Dorsolateral prefrontal cortex (tissue), 120 donors: ENCODE measurements at regions of chr7 and their contacts with region 1.

Region 1: DNA sequence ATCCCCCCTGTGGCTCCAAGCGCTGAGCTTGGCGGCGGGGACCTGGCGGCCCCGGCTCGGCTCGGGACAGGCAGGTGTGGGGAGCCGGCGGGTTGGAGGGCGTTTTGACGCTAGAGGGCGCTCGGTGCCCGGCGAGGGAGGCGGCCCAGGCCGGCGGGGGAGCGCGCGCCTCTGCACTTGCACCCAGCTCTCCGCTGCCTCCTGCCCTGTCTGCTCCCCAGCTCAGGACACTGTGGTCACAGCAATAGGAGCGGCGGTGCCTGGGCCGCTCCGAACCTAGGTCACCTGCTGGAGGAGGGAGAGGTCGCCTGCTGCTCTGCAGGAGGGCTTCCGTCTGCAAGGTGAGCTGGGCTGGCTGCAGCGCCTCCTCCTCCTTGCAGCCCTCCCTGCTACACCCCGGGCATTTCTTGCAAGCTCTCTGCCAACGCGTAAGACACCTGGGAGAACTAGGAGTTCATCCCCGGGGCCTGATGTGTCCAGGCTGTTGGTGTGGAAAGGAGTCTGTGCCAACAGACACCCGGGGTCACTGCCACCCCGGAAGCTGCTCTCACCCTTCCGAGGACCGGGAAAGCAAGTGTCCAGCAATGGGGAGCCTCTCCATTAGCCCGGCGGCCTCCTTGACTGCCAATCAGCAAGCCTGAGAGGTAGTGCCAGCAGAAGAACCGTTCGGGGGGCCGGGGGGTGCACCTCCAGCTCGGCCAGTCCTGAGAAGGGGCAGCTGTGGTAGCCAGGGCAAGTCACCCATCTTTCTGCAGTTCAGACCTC is 620.4 kb downstream of the GALNT17 start:
- DNase-seq: peak; percentile 38 to 84 (median 60)
- H3K4me3 ChIP-seq: peak overlapping the region in 51 of 59 donors; percentile 9 to 58 (median 37)
- H3K27ac ChIP-seq: no peak overlapping the region
- H3K27me3 ChIP-seq: peaks cover 0 to 26% (median 3%) of the 10 kb centered on the region in 45 donors
- CTCF ChIP-seq: peak; percentile 45 to 91 (median 82)

Region 2: GRCh38 chr7:71787513-71787912 is 35.2 kb after region 1 on chr7:
- intact Hi-C with region 1: no loop called
- DNase-seq: no peak
- H3K4me3 ChIP-seq: no peak overlapping the region
- H3K27ac ChIP-seq: no peak overlapping the region
- H3K27me3 ChIP-seq: no peaks in the 10 kb centered on the region
- CTCF ChIP-seq: no peak

Region 3: GRCh38 chr7:72334066-72334465 is 581.7 kb after region 1 on chr7:
- intact Hi-C with region 1: loop called in 1 of 2 experiments (anchors 10 kb)
- DNase-seq: no peak
- H3K4me3 ChIP-seq: no peak overlapping the region
- H3K27ac ChIP-seq: no peak overlapping the region
- H3K27me3 ChIP-seq: peaks cover 0 to 32% (median 11%) of the 10 kb centered on the region in 45 donors
- CTCF ChIP-seq: peak in 49 of 56 donors; percentile 20 to 62 (median 42)

Region 4: GRCh38 chr7:72493850-72494661 is 741.7 kb after region 1 on chr7:
- intact Hi-C with region 1: loop called (anchors 2 to 5 kb)
- DNase-seq: peak; percentile 49 to 88 (median 71)
- H3K4me3 ChIP-seq: no peak overlapping the region
- H3K27ac ChIP-seq: no peak overlapping the region
- H3K27me3 ChIP-seq: peaks cover 0 to 2% (median 0%) of the 10 kb centered on the region in 45 donors
- CTCF ChIP-seq: peak; percentile 61 to 91 (median 82)

Region 5: GRCh38 chr7:72785166-72785955 is 1033.0 kb after region 1 on chr7:
- intact Hi-C with region 1: loop called in 1 of 2 experiments (anchors 5 kb)
- DNase-seq: no peak
- H3K4me3 ChIP-seq: no peak overlapping the region
- H3K27ac ChIP-seq: no peak overlapping the region
- H3K27me3 ChIP-seq: no peaks in the 10 kb centered on the region
- CTCF ChIP-seq: no peak